H1 (cell line): ENCODE measurements at regions of chr20 and their contacts with region 1.

Region 1: DNA sequence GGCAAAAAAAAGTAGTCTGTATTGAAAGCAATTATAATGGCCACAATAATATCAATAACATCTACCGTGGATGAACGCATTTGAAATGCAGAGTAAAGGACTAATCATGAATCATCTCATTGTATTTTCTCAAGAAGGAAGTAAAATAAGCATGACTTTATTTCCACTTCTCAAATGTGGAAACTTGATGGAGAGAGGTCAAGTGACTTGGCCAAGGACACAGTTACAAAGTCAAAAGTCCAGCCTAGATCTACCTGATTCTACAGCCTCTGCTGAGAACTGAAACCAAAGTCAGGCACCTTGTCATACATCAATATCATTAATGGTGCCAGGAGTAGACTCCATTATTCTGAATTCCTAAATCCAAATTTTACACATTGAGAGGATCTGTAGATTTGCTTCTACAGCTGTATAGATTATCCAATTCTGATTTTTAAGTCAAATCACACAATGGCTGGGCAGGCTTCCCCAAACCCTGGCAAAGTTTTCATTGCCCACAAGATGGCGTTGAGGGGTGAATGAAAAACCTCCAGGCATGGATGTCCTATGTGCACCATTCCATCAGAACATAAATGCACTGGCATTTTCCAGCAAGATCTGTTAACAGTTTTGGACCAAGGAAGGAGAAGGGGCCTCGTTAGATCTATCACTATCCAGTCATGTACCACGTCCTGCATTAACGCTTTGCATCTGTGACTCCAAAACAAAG is 423.1 kb downstream of the MAFB start:
- DNase-seq: no peak
- H3K4me3 ChIP-seq: no peak overlapping the region
- H3K27ac ChIP-seq: no peak overlapping the region
- H3K4me1 ChIP-seq: peaks cover 7 to 21% (median 17%) of the 10 kb centered on the region in 4 experiments
- H3K27me3 ChIP-seq: no peaks in the 10 kb centered on the region
- CTCF ChIP-seq: peak; percentile 45 to 68 (median 50)
- EP300 ChIP-seq: no peak
- POLR2A ChIP-seq: no peak
- RAD21 ChIP-seq: peak; percentile 64 to 67

Region 2: DNA sequence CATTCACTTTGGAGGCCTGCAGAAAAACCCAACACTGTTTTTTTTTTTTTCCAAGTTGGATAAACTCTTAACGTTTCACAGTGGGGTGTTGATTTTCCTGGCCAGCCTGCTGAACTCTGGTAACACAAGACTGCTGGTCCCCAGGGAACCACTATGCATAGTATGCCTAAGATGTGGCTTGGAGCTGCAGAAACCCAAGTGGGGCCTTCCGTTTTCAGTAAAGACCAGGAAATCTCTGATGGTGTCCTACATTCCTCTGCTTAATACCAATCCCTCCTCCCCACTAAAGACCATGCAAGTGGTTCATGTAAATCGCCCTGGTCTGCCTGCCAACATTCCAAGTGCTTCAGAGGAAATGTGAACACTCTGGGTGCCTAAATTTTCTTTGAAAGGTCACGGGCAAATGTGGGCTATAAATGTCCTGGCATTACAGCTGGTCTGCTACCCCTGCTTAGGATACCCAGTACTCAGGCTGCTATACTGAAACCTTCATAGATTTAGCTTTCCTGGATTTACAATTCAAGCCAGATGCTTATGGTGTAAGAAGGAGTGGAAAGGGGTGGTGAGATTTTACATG is 192.4 kb before region 1 on chr20:
- CTCF ChIA-PET with region 1: no interaction called
- POLR2A ChIA-PET with region 1: no interaction called
- DNase-seq: peak; percentile 36 to 56
- H3K4me3 ChIP-seq: no peak overlapping the region
- H3K27ac ChIP-seq: no peak overlapping the region; the same call in 1 of the 2 replicates
- H3K4me1 ChIP-seq: peaks cover 2 to 9% (median 7%) of the 10 kb centered on the region in 4 experiments; a peak in 6 of 7 replicates
- H3K27me3 ChIP-seq: no peaks in the 10 kb centered on the region
- CTCF ChIP-seq: no peak
- EP300 ChIP-seq: peak in 1 of 2 experiments; percentile 17; a peak in 1 of 3 replicates
- POLR2A ChIP-seq: no peak
- RAD21 ChIP-seq: no peak; a peak in 1 of 4 replicates

Region 3: GRCh38 chr20:40279390-40279789 is 13.4 kb after region 1 on chr20:
- CTCF ChIA-PET with region 1: interaction called, 12 read pairs
- POLR2A ChIA-PET with region 1: interaction called, 74 read pairs
- DNase-seq: no peak
- H3K4me3 ChIP-seq: no peak overlapping the region
- H3K27ac ChIP-seq: no peak overlapping the region
- H3K4me1 ChIP-seq: peaks cover 6 to 25% (median 16%) of the 10 kb centered on the region in 4 experiments
- H3K27me3 ChIP-seq: no peaks in the 10 kb centered on the region
- CTCF ChIP-seq: no peak
- EP300 ChIP-seq: no peak
- POLR2A ChIP-seq: no peak
- RAD21 ChIP-seq: no peak

Region 4: DNA sequence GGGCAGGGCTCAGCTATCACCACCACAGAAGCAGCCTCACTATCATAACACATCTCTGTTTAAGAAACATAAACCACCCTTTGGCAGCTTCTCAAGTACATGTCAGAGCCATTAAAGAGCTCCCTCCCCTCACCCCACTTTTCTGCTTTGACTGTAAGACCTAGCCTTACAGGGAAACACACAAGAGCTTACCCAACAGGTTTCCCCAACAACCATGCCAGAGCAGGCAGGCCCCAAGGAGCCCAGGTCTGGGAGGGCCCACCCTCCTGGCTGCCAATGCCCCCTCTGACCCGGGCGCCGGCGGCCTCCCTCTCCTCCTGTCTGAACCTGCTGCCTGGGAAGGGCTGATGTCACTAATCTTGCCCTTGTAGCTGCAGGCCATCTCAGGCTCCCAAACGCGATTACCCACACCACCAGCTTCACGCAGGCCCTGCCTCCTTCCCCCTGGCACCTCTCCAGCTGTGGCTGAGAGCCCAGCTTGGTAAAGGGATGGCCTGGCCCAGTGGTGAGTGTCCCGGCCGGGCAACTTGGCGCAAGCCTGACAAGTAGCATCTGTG is 21.1 kb after region 1 on chr20:
- CTCF ChIA-PET with region 1: interaction called, 10 read pairs
- POLR2A ChIA-PET with region 1: interaction called, 4 read pairs
- DNase-seq: no peak
- H3K4me3 ChIP-seq: no peak overlapping the region
- H3K27ac ChIP-seq: no peak overlapping the region
- H3K4me1 ChIP-seq: peaks cover 0 to 8% (median 5%) of the 10 kb centered on the region in 4 experiments; a peak in 5 of 7 replicates
- H3K27me3 ChIP-seq: no peaks in the 10 kb centered on the region
- CTCF ChIP-seq: no peak
- EP300 ChIP-seq: no peak
- POLR2A ChIP-seq: no peak
- RAD21 ChIP-seq: no peak

Region 5: DNA sequence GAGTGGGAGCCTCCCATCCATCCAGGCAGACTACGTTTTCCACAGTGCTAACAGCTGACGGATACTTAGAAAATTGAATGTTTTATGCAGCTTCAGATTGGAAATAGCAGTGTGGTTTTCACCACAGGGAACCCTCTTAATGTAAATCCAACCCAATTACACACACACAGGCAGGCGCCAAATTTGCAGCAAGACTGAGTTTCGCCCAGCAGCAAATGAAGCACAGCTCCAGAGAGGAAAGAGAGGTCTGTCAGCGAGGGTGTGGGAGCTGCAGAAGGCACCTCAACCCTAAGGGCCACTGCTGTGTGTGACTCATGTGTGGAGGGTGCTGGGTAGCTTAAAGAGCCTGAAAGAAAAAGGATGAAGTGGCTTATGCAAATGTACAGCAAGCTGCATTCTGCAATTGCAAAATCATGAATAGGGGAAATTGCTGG is 57.4 kb after region 1 on chr20:
- CTCF ChIA-PET with region 1: no interaction called
- POLR2A ChIA-PET with region 1: no interaction called
- DNase-seq: no peak
- H3K4me3 ChIP-seq: no peak overlapping the region
- H3K27ac ChIP-seq: no peak overlapping the region
- H3K4me1 ChIP-seq: peaks cover 0 to 5% (median 2%) of the 10 kb centered on the region in 4 experiments; a peak in 4 of 7 replicates
- H3K27me3 ChIP-seq: no peaks in the 10 kb centered on the region
- CTCF ChIP-seq: no peak
- EP300 ChIP-seq: no peak
- POLR2A ChIP-seq: no peak
- RAD21 ChIP-seq: no peak